ENCODE measurements at regions of chr10 and their contacts with region 1.

Region 1: DNA sequence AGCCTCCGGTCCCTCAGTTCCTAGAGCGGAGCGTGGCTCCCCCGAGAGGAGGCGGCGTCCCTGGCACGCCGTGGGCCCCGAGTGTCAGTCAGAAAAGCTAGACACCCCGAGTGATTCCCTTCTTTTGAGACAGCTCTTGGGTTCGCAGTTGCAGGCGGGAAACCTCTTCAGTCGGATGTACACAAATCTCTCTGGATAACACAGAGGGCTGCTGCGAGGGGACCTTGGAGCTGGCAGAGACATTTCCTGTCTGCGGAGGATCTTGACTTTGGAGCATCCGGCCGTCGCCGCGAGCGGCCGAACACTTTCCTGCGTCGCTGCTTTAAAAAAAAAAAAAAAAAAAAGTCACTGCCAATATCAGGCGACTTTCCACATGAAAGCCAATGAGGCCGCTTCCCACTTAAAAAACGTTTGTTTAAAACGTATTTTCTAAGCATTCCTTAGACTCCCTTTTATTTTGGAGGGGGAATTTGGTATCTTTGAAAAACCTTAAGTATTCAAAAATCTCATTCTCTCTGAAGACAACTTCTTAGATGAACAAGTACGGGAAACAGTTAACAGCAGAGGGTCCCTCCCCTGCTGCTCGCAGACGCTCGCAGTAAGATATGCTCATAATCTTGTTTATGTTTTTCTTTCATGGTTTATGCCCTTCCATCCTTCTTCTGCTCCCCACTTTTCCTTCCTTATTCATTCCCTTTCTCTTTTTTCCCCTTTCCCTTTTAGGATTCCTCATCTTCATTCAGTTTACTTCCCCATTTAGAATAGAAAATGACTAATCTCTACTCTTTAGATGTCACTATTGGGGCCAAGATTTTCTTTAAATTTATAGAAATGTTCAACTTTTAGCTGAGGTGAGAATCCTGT is 10.0 kb downstream of the HHEX start:
- DNase-seq: no peak
- ATAC-seq: peak; percentile 75
- H3K4me3 ChIP-seq: peak overlapping the region; percentile 34 to 65
- H3K27ac ChIP-seq: peak overlapping the region; percentile 63
- H3K4me1 ChIP-seq: peaks cover 10% of the 10 kb centered on the region
- H3K27me3 ChIP-seq: no peaks in the 10 kb centered on the region
- CTCF ChIP-seq: no peak

Region 2: GRCh38 chr10:92760609-92761008 is 60.9 kb after region 1 on chr10:
- CTCF ChIA-PET with region 1: no interaction called
- POLR2A ChIA-PET with region 1: no interaction called
- in situ Hi-C with region 1: no loop called
- intact Hi-C with region 1: no loop called
- DNase-seq: no peak
- ATAC-seq: peak; percentile 60; the same call in 1 of the 2 replicates
- H3K4me3 ChIP-seq: no peak overlapping the region
- H3K27ac ChIP-seq: no peak overlapping the region
- H3K4me1 ChIP-seq: peaks cover 3% of the 10 kb centered on the region; the same call in 1 of the 2 replicates
- H3K27me3 ChIP-seq: no peaks in the 10 kb centered on the region
- CTCF ChIP-seq: no peak

Region 3: DNA sequence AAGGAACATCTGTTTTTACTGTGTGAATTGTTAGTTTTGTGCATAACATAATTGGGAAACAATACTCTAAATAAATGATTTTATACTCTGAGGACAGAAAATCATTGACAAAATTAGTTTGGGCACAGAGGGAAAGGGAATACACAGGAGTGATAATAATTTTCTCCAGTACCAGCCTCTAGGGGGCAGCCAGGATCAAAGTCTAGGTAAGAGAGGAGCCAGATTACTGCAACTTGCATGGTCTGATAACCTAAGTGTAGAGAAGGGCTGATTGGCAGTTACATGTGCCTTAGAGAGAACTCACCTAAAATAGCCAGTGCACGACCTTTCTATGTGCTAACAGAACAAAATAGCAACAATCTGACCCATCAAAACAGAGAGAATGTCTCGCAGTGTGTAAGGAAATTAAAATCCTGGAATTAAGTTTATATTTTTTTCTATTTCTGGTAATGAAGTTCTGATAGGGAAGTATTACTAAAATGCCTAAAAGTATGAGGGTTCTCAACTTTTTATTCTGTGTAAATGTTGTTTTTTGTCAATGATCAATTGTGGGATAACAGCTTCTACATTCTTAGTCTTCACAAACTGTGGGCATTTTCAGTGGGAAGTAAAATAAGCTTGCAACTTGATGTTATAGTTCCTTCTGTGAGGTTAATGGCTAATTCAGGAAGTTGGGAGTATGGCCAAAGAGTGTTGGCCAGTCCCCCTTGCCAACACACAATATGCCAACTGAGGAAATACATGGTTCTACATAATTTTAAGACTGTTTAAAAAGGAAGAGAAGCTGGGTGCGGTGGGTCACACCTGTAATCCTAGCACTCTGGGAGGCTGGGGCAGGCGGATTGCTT is 215.0 kb after region 1 on chr10:
- CTCF ChIA-PET with region 1: interaction called, 10 read pairs
- POLR2A ChIA-PET with region 1: no interaction called
- in situ Hi-C with region 1: no loop called
- intact Hi-C with region 1: no loop called
- DNase-seq: peak; percentile 51
- ATAC-seq: peak; percentile 98
- H3K4me3 ChIP-seq: no peak overlapping the region
- H3K27ac ChIP-seq: no peak overlapping the region; the same call in 1 of the 2 replicates
- H3K4me1 ChIP-seq: no peaks in the 10 kb centered on the region
- H3K27me3 ChIP-seq: no peaks in the 10 kb centered on the region
- CTCF ChIP-seq: peak; percentile 94

Measured in Panc1 (cell line).